GM12878 (cell line): ENCODE measurements at regions of chr1 and their contacts with region 1.

Region 1: GRCh38 chr1:206912445-206913095 is 9.2 kb downstream of the FCMR start:
- DNase-seq: no peak
- ATAC-seq: peak; percentile 78
- H3K4me3 ChIP-seq: no peak overlapping the region
- H3K27ac ChIP-seq: no peak overlapping the region
- H3K4me1 ChIP-seq: peaks cover 38% of the 10 kb centered on the region
- H3K27me3 ChIP-seq: no peaks in the 10 kb centered on the region
- CTCF ChIP-seq: peak; percentile 71 to 90 (median 77); a peak in 5 of 6 replicates
- EP300 ChIP-seq: no peak
- POLR2A ChIP-seq: peak; percentile 40; the same call in 1 of the 2 replicates
- RAD21 ChIP-seq: peak; percentile 76

Region 2: DNA sequence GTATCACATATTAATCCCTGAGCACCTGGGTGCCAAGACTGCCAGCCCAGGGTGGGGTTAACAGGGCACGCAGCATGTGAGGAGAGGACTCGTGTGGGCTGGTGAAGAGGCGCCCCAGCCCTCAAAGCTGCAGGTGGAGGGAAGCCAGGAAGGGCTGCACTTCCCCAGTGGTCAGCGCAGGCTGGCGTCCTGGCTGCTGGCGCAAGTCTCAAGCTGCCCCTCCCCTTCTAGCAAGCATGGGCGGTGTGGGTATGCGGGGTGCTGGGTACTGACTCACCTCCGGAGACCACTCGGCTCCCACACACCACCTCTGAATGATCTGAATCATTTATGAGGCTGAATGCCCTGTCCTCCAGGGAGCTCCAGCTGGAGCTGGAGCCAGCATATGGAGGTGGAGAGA is 344.3 kb before region 1 on chr1:
- CTCF ChIA-PET with region 1: no interaction called
- POLR2A ChIA-PET with region 1: no interaction called
- RAD21 ChIA-PET with region 1: no interaction called
- SMC1A ChIA-PET with region 1: no interaction called
- in situ Hi-C with region 1: no loop called
- intact Hi-C with region 1: no loop called
- DNase-seq: no peak
- ATAC-seq: no peak
- H3K4me3 ChIP-seq: no peak overlapping the region
- H3K27ac ChIP-seq: no peak overlapping the region
- H3K4me1 ChIP-seq: peaks cover 43% of the 10 kb centered on the region
- H3K27me3 ChIP-seq: no peaks in the 10 kb centered on the region
- CTCF ChIP-seq: no peak
- EP300 ChIP-seq: no peak
- POLR2A ChIP-seq: no peak
- RAD21 ChIP-seq: no peak

Region 3: GRCh38 chr1:206716870-206717673 is 195.5 kb before region 1 on chr1:
- CTCF ChIA-PET with region 1: interaction called, 13 read pairs
- POLR2A ChIA-PET with region 1: interaction called, 3 read pairs
- RAD21 ChIA-PET with region 1: interaction called, 7 read pairs
- SMC1A ChIA-PET with region 1: interaction called, 5 read pairs
- in situ Hi-C with region 1: no loop called
- intact Hi-C with region 1: no loop called
- DNase-seq: peak; percentile 88
- ATAC-seq: peak; percentile 78
- H3K4me3 ChIP-seq: 0 out of 2 replicates have a peak overlapping the region, but pooled peaks have one; percentile 19
- H3K27ac ChIP-seq: peak overlapping the region; percentile 73
- H3K4me1 ChIP-seq: peaks cover 74% of the 10 kb centered on the region
- H3K27me3 ChIP-seq: no peaks in the 10 kb centered on the region
- CTCF ChIP-seq: no peak
- EP300 ChIP-seq: peak in 1 of 2 experiments; percentile 34; a peak in 1 of 4 replicates
- POLR2A ChIP-seq: no peak
- RAD21 ChIP-seq: no peak

Region 4: DNA sequence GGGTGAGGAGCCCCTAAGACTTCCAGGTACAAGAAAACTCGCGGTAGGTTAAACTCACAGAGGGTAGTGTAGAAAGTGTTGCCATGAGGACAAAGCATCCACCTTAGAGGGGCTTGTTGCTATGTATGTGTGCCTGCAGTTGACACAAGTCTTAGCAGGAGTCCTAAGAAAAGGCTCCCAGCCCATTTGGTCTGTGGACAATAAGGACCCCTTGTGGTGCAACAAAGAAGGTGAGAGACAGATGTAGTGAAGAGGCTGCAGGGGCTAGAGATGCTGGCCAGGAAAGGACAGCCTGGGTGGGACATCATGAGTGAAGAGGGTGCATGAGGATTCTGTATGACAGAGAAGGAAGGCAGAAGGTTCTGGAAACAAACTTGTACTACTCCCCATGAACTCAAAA is 104.0 kb before region 1 on chr1:
- CTCF ChIA-PET with region 1: interaction called, 137 read pairs
- POLR2A ChIA-PET with region 1: interaction called, 6 read pairs
- RAD21 ChIA-PET with region 1: interaction called, 35 read pairs
- SMC1A ChIA-PET with region 1: interaction called, 64 read pairs
- in situ Hi-C with region 1: loop called (anchors 5 kb)
- intact Hi-C with region 1: loop called (anchors 1 kb)
- DNase-seq: no peak
- ATAC-seq: peak; percentile 99
- H3K4me3 ChIP-seq: no peak overlapping the region
- H3K27ac ChIP-seq: no peak overlapping the region
- H3K4me1 ChIP-seq: peaks cover 11% of the 10 kb centered on the region
- H3K27me3 ChIP-seq: no peaks in the 10 kb centered on the region
- CTCF ChIP-seq: peak; percentile 69 to 92 (median 70)
- EP300 ChIP-seq: no peak
- POLR2A ChIP-seq: no peak
- RAD21 ChIP-seq: peak; percentile 99

Region 5: GRCh38 chr1:206865013-206865671 is 47.4 kb before region 1 on chr1 and contains the start of gene IL20:
- CTCF ChIA-PET with region 1: interaction called, 37 read pairs
- POLR2A ChIA-PET with region 1: interaction called, 5 read pairs
- RAD21 ChIA-PET with region 1: interaction called, 12 read pairs
- SMC1A ChIA-PET with region 1: interaction called, 16 read pairs
- in situ Hi-C with region 1: no loop called
- intact Hi-C with region 1: no loop called
- DNase-seq: peak; percentile 31
- ATAC-seq: peak; percentile 95
- H3K4me3 ChIP-seq: no peak within 1 kb of the TSS
- H3K27ac ChIP-seq: no peak within 1 kb of the TSS
- H3K4me1 ChIP-seq: no peaks in the 10 kb centered on the region
- H3K27me3 ChIP-seq: peaks cover 0 to 2% of the 10 kb centered on the region in 2 experiments; a peak in 1 of 4 replicates
- CTCF ChIP-seq: peak; percentile 81 to 95 (median 93)
- EP300 ChIP-seq: no peak
- POLR2A ChIP-seq: no peak
- RAD21 ChIP-seq: peak; percentile 69
- polyA plus RNA-seq, gene IL20: 0.08 TPM in 1 of 2 experiments, not detected in the other

Region 6: DNA sequence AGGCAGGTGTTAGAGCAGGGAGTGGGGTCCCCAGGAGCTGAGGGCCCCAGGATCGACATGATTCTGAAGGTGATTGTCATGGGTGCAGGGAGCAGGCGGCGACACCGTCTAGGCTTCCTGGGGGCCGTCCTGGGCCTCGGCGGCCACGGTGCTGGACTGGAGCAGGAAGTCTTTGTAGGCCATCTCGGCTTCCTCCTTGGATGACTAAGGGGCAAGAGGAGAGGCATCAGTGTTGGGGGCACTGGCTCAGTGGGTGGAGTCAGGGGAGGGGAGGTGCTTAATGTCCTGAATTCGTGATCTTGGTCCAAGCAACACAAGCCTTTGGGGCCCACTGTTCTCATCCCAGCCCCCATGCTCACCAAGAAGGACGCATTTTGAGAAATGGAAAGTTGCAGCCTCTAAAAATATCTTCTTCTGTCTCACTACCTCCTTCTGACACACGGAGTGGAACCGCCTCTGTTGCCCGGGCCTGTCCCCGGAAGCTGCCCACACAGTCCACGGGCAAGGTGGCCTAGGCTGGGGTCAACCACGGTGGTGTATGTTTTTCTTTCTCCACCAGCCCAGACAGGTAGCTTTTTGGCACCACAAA is 17.7 kb after region 1 on chr1:
- CTCF ChIA-PET with region 1: interaction called, 643 read pairs
- POLR2A ChIA-PET with region 1: interaction called, 222 read pairs
- RAD21 ChIA-PET with region 1: interaction called, 371 read pairs
- SMC1A ChIA-PET with region 1: interaction called, 431 read pairs
- in situ Hi-C with region 1: no loop called
- intact Hi-C with region 1: loop called (anchors 1 kb)
- DNase-seq: peak; percentile 96
- ATAC-seq: peak; percentile 86
- H3K4me3 ChIP-seq: peak overlapping the region; percentile 64
- H3K27ac ChIP-seq: peak overlapping the region; percentile 99
- H3K4me1 ChIP-seq: peaks cover 49% of the 10 kb centered on the region
- H3K27me3 ChIP-seq: no peaks in the 10 kb centered on the region
- CTCF ChIP-seq: no peak
- EP300 ChIP-seq: peak; percentile 93 to 94
- POLR2A ChIP-seq: peak; percentile 84
- RAD21 ChIP-seq: peak; percentile 12; the same call in 1 of the 2 replicates

Region 7: GRCh38 chr1:206967096-206967849 is 54.7 kb after region 1 on chr1:
- CTCF ChIA-PET with region 1: interaction called, 39 read pairs
- POLR2A ChIA-PET with region 1: interaction called, 5 read pairs
- RAD21 ChIA-PET with region 1: interaction called, 5 read pairs
- SMC1A ChIA-PET with region 1: interaction called, 36 read pairs
- in situ Hi-C with region 1: no loop called
- intact Hi-C with region 1: no loop called
- DNase-seq: peak; percentile 72
- ATAC-seq: peak; percentile 72
- H3K4me3 ChIP-seq: 0 out of 2 replicates have a peak overlapping the region, but pooled peaks have one; percentile 37
- H3K27ac ChIP-seq: peak overlapping the region; percentile 52
- H3K4me1 ChIP-seq: peaks cover 38% of the 10 kb centered on the region
- H3K27me3 ChIP-seq: no peaks in the 10 kb centered on the region
- CTCF ChIP-seq: no peak
- EP300 ChIP-seq: 0 out of 4 replicates have a peak, but pooled peaks of 1 of the 2 experiments have one; percentile 32
- POLR2A ChIP-seq: no peak
- RAD21 ChIP-seq: no peak